Transverse colon (tissue), 4 donors: ENCODE measurements at regions of chr15 and their contacts with region 1.

Region 1: DNA sequence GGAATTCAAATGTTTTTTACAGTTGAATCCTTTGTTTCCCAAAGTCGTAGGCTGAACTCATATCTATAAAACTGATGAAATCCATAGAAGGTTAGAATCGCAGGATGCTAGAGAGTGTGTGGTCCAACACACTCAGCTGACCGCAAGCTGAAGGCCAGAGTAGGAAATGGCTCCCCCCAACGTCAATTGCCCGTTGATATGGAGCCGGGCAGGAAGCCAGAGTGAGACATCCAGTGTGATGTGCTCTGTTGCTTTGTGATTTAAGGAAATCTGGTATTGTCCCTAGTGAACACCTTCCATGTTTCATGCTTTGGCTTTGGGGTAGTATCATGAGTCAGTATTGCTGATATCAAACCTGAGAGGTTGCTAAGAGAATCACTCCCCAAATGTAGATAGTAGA is 5.8 kb upstream of the MEX3B start:
- DNase-seq: no peak
- H3K4me3 ChIP-seq: no peak overlapping the region
- H3K27ac ChIP-seq: no peak overlapping the region
- H3K4me1 ChIP-seq: peaks cover 4 to 8% (median 7%) of the 10 kb centered on the region in 4 donors
- H3K27me3 ChIP-seq: peaks cover 48% of the 10 kb centered on the region
- CTCF ChIP-seq: no peak
- EP300 ChIP-seq: no peak
- POLR2A ChIP-seq: no peak

Region 2: DNA sequence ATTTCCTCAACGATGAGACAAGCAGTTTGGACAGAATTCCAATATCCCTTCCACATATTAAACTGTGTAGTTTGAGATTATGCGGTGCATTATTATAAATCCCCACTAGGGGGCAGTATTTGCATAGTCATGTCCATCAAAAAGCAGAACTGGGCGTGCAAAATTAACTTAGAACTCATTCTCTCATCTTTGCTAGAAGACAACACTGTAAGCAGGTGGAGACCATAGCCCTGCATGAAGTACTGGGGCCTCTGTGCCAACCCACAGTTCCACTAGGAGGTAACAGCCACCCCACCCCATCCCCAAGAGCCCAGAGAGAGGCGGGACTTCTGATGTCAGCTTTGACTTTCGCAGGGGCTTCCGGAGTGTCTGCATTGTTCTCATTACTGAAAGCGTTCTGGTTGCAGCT is 571.0 kb before region 1 on chr15:
- in situ Hi-C with region 1: loop called in 2 of 4 experiments (anchors 25 kb)
- intact Hi-C with region 1: no loop called
- DNase-seq: no peak
- H3K4me3 ChIP-seq: no peak overlapping the region
- H3K27ac ChIP-seq: no peak overlapping the region
- H3K4me1 ChIP-seq: no peaks in the 10 kb centered on the region
- H3K27me3 ChIP-seq: no peaks in the 10 kb centered on the region
- CTCF ChIP-seq: peak; percentile 85 to 93 (median 90)
- EP300 ChIP-seq: no peak
- POLR2A ChIP-seq: no peak

Region 3: GRCh38 chr15:82551666-82552247 is 500.1 kb after region 1 on chr15:
- in situ Hi-C with region 1: no loop called
- intact Hi-C with region 1: loop called (anchors 10 kb)
- DNase-seq: no peak
- H3K4me3 ChIP-seq: no peak overlapping the region
- H3K27ac ChIP-seq: no peak overlapping the region
- H3K4me1 ChIP-seq: no peaks in the 10 kb centered on the region
- H3K27me3 ChIP-seq: no peaks in the 10 kb centered on the region
- CTCF ChIP-seq: no peak
- EP300 ChIP-seq: no peak
- POLR2A ChIP-seq: no peak